ENCODE measurements at regions of chr12 and their contacts with region 1.

Region 1: GRCh38 chr12:97404543-97404942 is 58.1 kb upstream of the RMST start:
- DNase-seq: peak; percentile 47
- CTCF ChIP-seq: peak; percentile 75

Region 2: DNA sequence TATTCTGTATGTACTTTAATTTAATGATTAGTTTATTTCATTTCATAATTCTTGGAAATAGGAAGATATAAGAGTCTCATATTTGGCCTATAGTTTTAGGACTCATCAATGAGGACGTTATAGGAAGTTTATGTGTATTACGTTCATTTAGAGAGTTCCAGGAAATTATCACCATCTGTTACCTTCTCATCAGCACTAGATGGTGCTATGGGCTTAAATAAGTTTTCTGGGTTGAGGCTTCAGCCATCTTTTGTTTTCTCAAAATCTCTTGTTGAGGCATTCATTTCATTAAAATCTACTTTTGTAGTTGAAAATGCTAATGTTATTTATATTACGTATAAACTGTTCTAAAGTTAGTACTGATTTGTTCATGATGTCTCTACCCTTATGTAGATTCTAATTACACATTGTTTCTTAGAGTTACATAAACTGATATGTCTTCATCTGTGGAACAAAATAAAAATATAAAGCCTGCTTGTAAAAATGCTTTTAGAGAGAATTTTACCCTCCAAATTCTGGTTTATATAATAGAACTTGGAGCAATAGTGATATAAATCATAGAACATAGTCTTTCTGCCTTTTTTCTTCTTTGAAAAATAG is 825.9 kb before region 1 on chr12:
- CTCF ChIA-PET with region 1: interaction called, 11 read pairs
- POLR2A ChIA-PET with region 1: no interaction called
- DNase-seq: peak; percentile 44
- CTCF ChIP-seq: peak; percentile 52

Region 3: DNA sequence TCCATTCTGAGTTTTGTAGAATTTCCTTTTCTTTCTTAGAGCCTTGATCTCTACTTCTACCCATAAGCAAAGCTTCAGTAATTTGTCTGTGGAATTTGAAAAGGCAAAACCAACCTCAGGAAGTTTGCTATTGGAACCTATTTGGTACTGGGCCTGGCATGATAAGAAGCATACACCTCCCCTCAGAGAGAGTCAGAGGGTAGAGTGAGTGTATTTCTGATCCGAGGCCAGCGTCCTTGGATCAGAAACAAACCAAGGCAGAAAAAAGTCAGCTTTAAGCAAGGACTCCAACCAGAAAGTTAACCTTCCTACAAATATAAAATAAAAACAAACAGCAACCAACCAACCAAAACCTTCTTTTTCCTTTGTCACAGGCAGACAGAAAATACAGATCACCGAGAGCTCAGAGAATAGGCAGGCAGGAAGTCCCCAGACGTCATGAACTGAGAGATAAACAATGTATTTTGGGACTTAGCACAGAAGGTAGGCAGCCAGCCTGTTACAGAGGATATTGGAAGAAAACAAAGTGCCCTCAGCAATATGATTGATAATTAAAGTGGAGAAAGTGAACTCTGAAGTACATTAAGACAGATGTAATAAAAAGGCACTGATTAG is 356.0 kb before region 1 on chr12:
- CTCF ChIA-PET with region 1: no interaction called
- POLR2A ChIA-PET with region 1: no interaction called
- DNase-seq: no peak
- CTCF ChIP-seq: no peak

Region 4: DNA sequence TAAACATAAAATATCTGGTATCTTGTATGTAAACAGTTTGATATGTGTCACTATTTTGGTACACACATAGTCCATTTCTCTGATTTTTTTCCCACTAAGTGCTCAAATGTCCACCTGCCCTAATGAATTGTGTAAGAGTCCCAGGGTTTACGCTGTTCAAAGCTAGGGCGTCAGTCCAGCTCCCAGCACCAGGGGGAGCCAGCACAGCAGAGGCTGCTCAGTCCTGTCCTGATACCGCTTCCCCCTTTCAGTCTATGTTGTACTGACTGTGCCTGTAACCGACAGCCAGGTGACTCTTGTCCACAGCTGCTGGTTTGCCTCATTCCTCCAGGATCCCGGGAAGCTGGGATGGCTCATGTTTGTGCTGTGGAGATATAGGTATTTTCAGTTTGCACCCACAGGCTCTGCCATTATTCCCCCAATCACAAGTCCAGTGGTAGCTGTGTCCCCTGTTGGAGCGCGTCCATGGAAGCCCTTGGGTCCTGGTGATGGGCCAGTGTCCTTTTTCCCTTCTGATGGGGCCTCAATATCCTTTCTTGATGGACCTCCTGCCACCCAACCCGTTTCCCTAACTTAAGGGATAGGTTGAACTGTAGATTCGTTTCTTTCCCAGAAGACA is 255.5 kb before region 1 on chr12:
- CTCF ChIA-PET with region 1: interaction called, 89 read pairs
- POLR2A ChIA-PET with region 1: no interaction called
- DNase-seq: peak; percentile 54
- CTCF ChIP-seq: peak; percentile 90

Region 5: GRCh38 chr12:97386133-97386581 is 18.4 kb before region 1 on chr12:
- CTCF ChIA-PET with region 1: interaction called, 28 read pairs
- POLR2A ChIA-PET with region 1: no interaction called
- DNase-seq: no peak
- CTCF ChIP-seq: no peak

Region 6: GRCh38 chr12:97425380-97425779 is 20.8 kb after region 1 on chr12:
- CTCF ChIA-PET with region 1: interaction called, 17 read pairs
- POLR2A ChIA-PET with region 1: no interaction called
- DNase-seq: no peak
- CTCF ChIP-seq: no peak